Activated B cell treated with CpG ODN at 0.5 μM for 24 hours (primary cell): ENCODE measurements at regions of chr12 and their contacts with region 1.

Region 1: DNA sequence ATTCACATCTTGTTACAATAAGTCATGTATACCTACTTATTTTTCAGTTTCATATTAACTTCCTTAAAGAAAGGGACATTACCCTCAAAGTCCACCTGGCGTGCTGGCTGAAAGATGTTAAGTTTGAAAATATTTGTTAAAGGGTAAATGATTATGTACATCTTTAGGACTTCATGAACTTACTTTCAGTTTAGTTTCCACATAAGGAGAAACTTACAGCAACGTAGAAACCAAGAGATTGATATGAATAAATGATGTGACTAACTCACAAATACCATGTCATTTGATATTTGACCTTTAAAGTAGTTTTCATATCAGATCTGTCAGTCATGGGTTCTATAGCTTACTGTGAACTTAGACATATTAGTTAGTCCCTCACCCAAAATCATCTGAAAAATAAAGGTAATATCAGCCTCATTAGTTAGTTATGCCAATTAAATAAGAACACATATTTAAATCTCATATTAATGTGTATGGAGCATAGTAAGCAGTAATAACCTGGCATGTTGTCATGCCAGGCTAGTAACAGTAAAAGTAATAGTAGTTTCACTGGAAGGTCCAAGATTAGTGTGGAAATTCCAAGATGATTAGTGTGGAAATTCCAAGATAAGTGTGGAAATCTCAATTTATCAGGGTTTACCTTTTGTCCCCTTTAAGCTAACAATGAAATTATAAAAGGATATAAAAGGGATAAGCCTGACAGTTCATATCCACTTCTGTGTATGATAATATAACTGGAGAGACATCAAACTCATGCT is 1.9 kb upstream of the CLEC2D start:
- DNase-seq: no peak
- ATAC-seq: peak; percentile 46
- H3K4me3 Mint-ChIP-seq: peak overlapping the region; percentile 95
- H3K27ac Mint-ChIP-seq: peak overlapping the region; percentile 96
- H3K4me1 Mint-ChIP-seq: peaks cover 76% of the 10 kb centered on the region
- H3K27me3 Mint-ChIP-seq: no peaks in the 10 kb centered on the region
- CTCF ChIP-seq: no peak

Region 2: GRCh38 chr12:9702255-9702654 is 34.7 kb after region 1 on chr12:
- CTCF ChIA-PET with region 1: interaction called, 13 read pairs
- POLR2A ChIA-PET with region 1: interaction called, 49 read pairs
- intact Hi-C with region 1: loop called (anchors 5 kb)
- DNase-seq: no peak
- ATAC-seq: peak; percentile 41
- H3K4me3 Mint-ChIP-seq: peak overlapping the region; percentile 65
- H3K27ac Mint-ChIP-seq: peak overlapping the region; percentile 85
- H3K4me1 Mint-ChIP-seq: peaks cover 85% of the 10 kb centered on the region
- H3K27me3 Mint-ChIP-seq: no peaks in the 10 kb centered on the region
- CTCF ChIP-seq: no peak